H1 (cell line): ENCODE measurements at regions of chr12 and their contacts with region 1.

Region 1: GRCh38 chr12:5083955-5084849 is 40.5 kb downstream of the KCNA5 start:
- DNase-seq: peak in 1 of 2 experiments; percentile 65
- H3K4me3 ChIP-seq: no peak overlapping the region
- H3K27ac ChIP-seq: no peak overlapping the region
- H3K4me1 ChIP-seq: peaks cover 0 to 5% (median 0%) of the 10 kb centered on the region in 4 experiments; a peak in 1 of 7 replicates
- H3K27me3 ChIP-seq: no peaks in the 10 kb centered on the region
- CTCF ChIP-seq: peak in 2 of 3 experiments; percentile 66 to 71; a peak in 3 of 4 replicates
- EP300 ChIP-seq: no peak
- POLR2A ChIP-seq: no peak
- RAD21 ChIP-seq: peak; percentile 85 to 88

Region 2: GRCh38 chr12:5013266-5013730 is 70.9 kb before region 1 on chr12:
- CTCF ChIA-PET with region 1: interaction called, 167 read pairs
- POLR2A ChIA-PET with region 1: no interaction called
- DNase-seq: no peak
- H3K4me3 ChIP-seq: no peak overlapping the region
- H3K27ac ChIP-seq: no peak overlapping the region
- H3K4me1 ChIP-seq: peaks cover 0 to 8% (median 2%) of the 10 kb centered on the region in 4 experiments; a peak in 3 of 7 replicates
- H3K27me3 ChIP-seq: peaks cover 0 to 1% (median 0%) of the 10 kb centered on the region in 4 experiments; a peak in 1 of 7 replicates
- CTCF ChIP-seq: no peak
- EP300 ChIP-seq: no peak
- POLR2A ChIP-seq: no peak
- RAD21 ChIP-seq: no peak

Region 3: DNA sequence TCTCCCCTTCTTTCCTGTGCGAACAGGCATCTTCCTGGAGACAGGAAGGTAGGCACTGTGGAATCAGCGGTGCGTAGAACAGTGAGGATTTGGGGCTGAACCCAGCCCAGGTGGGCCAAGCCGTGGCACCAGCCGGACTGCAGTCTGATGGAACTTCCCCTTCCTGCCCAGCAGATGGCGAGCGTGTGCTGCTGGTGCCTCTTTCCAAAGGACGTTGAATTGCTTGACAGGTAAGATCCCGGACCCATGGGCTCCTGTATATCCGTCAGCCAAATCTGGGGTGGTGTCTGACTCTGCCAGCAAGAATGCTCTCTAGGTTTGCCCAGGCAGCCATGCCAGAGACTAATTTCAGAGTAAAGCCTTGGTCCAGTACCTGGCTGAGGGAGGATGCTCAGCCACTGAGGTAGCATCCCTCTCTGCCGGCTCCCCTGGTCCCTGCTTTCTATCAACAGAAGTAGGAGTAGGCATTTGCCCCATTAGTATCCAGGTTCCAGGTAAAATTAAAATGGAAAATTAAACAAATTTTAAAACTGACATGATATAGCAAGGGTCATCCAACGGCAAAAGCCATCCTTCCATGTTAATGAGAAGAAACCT is 61.6 kb before region 1 on chr12:
- CTCF ChIA-PET with region 1: interaction called, 167 read pairs
- POLR2A ChIA-PET with region 1: interaction called, 5 read pairs
- DNase-seq: peak; percentile 57 to 69
- H3K4me3 ChIP-seq: no peak overlapping the region
- H3K27ac ChIP-seq: no peak overlapping the region
- H3K4me1 ChIP-seq: peaks cover 0 to 6% (median 2%) of the 10 kb centered on the region in 4 experiments; a peak in 4 of 7 replicates
- H3K27me3 ChIP-seq: no peaks in the 10 kb centered on the region; a peak in 1 of 7 replicates
- CTCF ChIP-seq: peak; percentile 91 to 98 (median 97)
- EP300 ChIP-seq: no peak
- POLR2A ChIP-seq: no peak
- RAD21 ChIP-seq: peak; percentile 96 to 98

Region 4: DNA sequence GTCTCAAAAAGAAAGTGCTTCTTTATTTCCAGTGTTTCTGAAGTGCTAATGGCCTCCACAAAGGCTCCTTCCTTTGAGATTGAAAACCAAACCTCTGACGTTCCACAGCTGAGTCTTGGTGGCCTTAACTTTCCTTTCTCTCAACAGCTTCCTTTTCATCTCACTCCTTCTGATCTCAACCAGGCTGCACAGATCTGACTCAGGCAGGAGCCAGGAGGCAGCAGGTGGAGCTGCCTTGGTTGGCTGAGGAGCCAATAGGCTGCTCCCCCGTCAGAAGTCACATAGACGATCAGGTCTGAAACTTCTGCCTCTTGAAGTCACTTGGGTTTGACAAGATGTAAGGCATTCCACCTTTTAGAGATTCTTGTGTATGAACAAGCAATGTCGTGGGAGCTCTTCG is 49.6 kb before region 1 on chr12:
- CTCF ChIA-PET with region 1: interaction called, 11 read pairs
- POLR2A ChIA-PET with region 1: no interaction called
- DNase-seq: no peak
- H3K4me3 ChIP-seq: no peak overlapping the region
- H3K27ac ChIP-seq: no peak overlapping the region
- H3K4me1 ChIP-seq: peaks cover 0 to 4% (median 1%) of the 10 kb centered on the region in 4 experiments; a peak in 1 of 7 replicates
- H3K27me3 ChIP-seq: no peaks in the 10 kb centered on the region; a peak in 1 of 7 replicates
- CTCF ChIP-seq: no peak
- EP300 ChIP-seq: no peak
- POLR2A ChIP-seq: no peak
- RAD21 ChIP-seq: no peak

Region 5: GRCh38 chr12:5059358-5059757 is 24.8 kb before region 1 on chr12:
- CTCF ChIA-PET with region 1: interaction called, 13 read pairs
- POLR2A ChIA-PET with region 1: no interaction called
- DNase-seq: no peak
- H3K4me3 ChIP-seq: no peak overlapping the region
- H3K27ac ChIP-seq: no peak overlapping the region
- H3K4me1 ChIP-seq: no peaks in the 10 kb centered on the region
- H3K27me3 ChIP-seq: no peaks in the 10 kb centered on the region; a peak in 1 of 7 replicates
- CTCF ChIP-seq: no peak
- EP300 ChIP-seq: no peak
- POLR2A ChIP-seq: no peak
- RAD21 ChIP-seq: no peak

Region 6: GRCh38 chr12:5094551-5094950 is 10.3 kb after region 1 on chr12:
- CTCF ChIA-PET with region 1: interaction called, 14 read pairs
- POLR2A ChIA-PET with region 1: no interaction called
- DNase-seq: no peak
- H3K4me3 ChIP-seq: no peak overlapping the region
- H3K27ac ChIP-seq: no peak overlapping the region
- H3K4me1 ChIP-seq: no peaks in the 10 kb centered on the region; a peak in 1 of 7 replicates
- H3K27me3 ChIP-seq: no peaks in the 10 kb centered on the region; a peak in 1 of 7 replicates
- CTCF ChIP-seq: no peak
- EP300 ChIP-seq: no peak
- POLR2A ChIP-seq: no peak
- RAD21 ChIP-seq: no peak

Region 7: GRCh38 chr12:5177731-5178130 is 93.5 kb after region 1 on chr12:
- CTCF ChIA-PET with region 1: no interaction called
- POLR2A ChIA-PET with region 1: no interaction called
- DNase-seq: no peak
- H3K4me3 ChIP-seq: no peak overlapping the region
- H3K27ac ChIP-seq: no peak overlapping the region
- H3K4me1 ChIP-seq: no peaks in the 10 kb centered on the region
- H3K27me3 ChIP-seq: 0 out of 7 replicates have a peak, but pooled peaks cover 0 to 2% (median 0%) of the 10 kb centered on the region in 4 experiments
- CTCF ChIP-seq: no peak
- EP300 ChIP-seq: no peak
- POLR2A ChIP-seq: no peak
- RAD21 ChIP-seq: no peak

Region 8: DNA sequence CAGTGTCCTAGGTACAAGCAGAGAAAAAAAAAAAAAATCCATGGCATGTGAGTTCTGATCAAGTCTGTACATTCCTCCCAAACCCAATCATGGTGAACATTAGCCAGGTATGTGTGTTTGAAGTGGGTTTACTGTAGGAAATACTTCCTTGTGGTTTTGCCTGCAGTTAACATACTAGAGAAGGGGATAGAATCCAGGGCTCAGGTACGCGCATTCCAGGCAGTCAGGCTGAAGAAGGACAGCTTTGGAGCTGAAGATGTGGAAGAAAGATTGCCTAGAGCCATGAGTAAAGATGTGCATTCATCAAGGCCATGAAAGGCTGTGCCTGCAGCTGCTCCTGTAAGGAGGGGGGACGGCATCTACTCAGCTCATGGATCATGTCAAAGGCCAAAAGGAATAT is 259.5 kb after region 1 on chr12:
- CTCF ChIA-PET with region 1: no interaction called
- POLR2A ChIA-PET with region 1: no interaction called
- DNase-seq: no peak
- H3K4me3 ChIP-seq: no peak overlapping the region
- H3K27ac ChIP-seq: no peak overlapping the region
- H3K4me1 ChIP-seq: no peaks in the 10 kb centered on the region; a peak in 1 of 7 replicates
- H3K27me3 ChIP-seq: no peaks in the 10 kb centered on the region
- CTCF ChIP-seq: no peak
- EP300 ChIP-seq: no peak
- POLR2A ChIP-seq: no peak
- RAD21 ChIP-seq: no peak